ENCODE measurements at regions of chr19 and their contacts with region 1.

Region 1: GRCh38 chr19:33868788-33869412 is 72.2 kb downstream of the KCTD15 start:
- DNase-seq: peak; percentile 50
- H3K4me3 ChIP-seq: no peak overlapping the region
- H3K27ac ChIP-seq: peak overlapping the region; percentile 2
- H3K4me1 ChIP-seq: peaks cover 23% of the 10 kb centered on the region
- H3K27me3 ChIP-seq: no peaks in the 10 kb centered on the region
- CTCF ChIP-seq: peak in 1 of 2 donors; percentile 47

Region 2: GRCh38 chr19:33795370-33796163 is 73.3 kb before region 1 on chr19:
- CTCF ChIA-PET with region 1: no interaction called
- dilution Hi-C with region 1: no loop called
- in situ Hi-C with region 1: no loop called
- intact Hi-C with region 1: loop called (anchors 2 kb)
- DNase-seq: peak; percentile 75
- H3K4me3 ChIP-seq: peak overlapping the region; percentile 71 to 85 (median 81)
- H3K27ac ChIP-seq: peak overlapping the region; percentile 65
- H3K4me1 ChIP-seq: peaks cover 15% of the 10 kb centered on the region
- H3K27me3 ChIP-seq: no peaks in the 10 kb centered on the region
- CTCF ChIP-seq: peak; percentile 38 to 73

Region 3: DNA sequence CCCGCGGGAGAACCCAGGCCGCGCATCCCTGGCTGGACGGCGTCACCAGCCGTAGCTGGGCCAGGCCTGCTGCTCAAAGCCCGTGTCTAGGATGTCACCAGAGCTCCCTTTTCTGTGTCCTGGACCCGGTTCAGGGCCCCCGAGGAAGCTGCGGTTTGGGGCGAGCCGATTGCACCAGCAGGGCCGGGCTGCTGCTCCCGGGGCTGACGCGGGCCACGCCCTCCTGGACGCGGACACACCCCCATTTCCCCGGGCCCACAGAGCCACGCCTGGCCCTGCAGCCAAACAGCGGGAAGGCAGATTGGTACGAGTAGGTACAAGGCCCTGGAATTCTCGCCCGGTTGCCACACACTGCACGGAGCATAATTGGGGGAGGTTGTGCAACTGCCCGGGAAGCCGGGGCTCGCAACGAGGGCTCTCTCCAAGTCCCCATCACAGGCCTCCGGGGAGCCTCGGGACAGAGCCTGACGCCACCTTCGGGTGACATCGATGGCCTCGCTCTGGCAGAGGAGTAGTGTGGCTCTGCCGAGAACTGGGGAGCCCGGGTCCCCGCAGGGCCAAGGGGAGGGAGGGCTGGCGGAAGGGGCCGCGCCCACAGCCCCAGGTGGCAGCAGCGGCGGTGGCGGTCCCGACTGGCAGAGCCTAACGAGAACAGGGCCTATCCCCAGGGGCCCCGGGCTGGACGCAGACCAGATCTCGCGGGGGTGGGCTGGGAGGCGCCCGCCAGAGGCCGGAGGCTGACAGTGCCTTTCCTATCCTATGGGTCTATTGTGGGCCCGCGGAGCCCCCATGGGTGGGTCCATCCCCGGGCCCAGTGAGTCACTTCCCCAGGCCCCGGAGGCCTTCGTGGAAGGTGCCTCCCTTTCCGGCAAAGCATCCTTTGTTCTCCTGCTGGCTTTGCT is 48.8 kb before region 1 on chr19:
- CTCF ChIA-PET with region 1: no interaction called
- dilution Hi-C with region 1: no loop called
- in situ Hi-C with region 1: no loop called
- intact Hi-C with region 1: loop called (anchors 2 kb)
- DNase-seq: peak; percentile 96
- H3K4me3 ChIP-seq: peak overlapping the region; percentile 37 to 43 (median 41)
- H3K27ac ChIP-seq: peak overlapping the region; percentile 90
- H3K4me1 ChIP-seq: peaks cover 38% of the 10 kb centered on the region
- H3K27me3 ChIP-seq: no peaks in the 10 kb centered on the region
- CTCF ChIP-seq: no peak

Region 4: DNA sequence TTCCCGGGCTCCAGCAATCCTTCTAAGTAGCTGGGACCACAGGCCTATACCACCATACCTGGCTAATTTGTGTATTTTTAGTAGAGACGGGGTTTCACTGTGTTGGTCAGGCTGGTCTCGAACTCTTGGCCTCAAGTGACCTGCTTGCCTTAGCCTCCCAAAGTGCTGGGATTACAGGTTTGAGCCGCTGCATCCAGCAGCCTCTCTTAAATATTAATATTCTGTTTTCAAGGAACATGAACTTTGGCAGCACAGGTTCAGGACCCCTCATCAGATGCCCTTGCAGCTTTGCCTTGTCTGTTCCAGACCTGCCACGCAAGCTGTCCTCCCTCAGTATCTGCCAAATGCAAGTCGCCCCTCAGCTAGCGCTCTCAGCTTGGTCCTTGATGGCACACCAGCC is 94.6 kb after region 1 on chr19:
- CTCF ChIA-PET with region 1: no interaction called
- dilution Hi-C with region 1: no loop called
- in situ Hi-C with region 1: no loop called
- intact Hi-C with region 1: no loop called
- DNase-seq: no peak
- H3K4me3 ChIP-seq: no peak overlapping the region
- H3K27ac ChIP-seq: no peak overlapping the region
- H3K4me1 ChIP-seq: no peaks in the 10 kb centered on the region
- H3K27me3 ChIP-seq: no peaks in the 10 kb centered on the region
- CTCF ChIP-seq: no peak

Measured in mammary epithelial cell (primary cell).